Activated CD8-positive, alpha-beta T cell treated with anti-CD3 and anti-CD28 coated beads for 36 hours (primary cell): ENCODE measurements at regions of chr17 and their contacts with region 1.

Region 1: DNA sequence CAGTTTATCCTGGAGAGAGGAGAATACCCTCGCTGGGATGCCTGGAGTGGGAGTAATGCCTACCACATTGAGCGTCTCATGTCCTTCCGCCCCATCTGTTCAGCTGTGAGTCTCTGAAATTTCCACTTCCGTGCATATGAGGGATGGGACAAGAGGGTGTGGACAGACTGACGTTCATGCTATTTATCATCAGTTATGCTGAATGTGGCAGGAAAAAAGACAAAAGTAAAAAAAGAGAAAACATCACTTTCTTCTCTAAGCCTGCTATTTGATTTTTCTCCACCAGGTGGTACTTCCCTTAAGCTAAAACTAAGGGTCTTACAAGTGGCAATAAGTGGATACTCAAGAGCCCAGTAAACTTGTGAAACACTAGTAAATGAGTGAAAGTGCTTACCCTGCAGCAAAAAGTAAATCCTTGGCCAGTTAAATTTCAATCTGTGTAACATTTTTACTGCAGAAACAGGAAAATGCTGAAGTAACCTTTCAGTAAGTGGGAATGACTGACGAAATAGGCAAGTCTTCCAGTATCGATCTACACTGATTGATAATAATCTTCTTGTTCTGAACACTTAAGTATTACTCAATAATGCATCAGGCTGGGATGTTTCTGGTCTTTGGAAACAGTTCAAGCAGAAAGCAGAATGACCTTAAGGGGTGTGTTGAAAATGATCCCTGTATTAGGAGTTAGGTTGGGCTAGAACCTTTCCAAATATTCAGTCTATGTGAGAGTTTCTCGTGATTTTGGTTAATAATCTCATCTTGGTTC is 5.6 kb downstream of the CRYBA1 start:
- DNase-seq: no peak
- ATAC-seq: no peak
- H3K4me3 Mint-ChIP-seq: no peak overlapping the region
- H3K27ac Mint-ChIP-seq: no peak overlapping the region
- H3K4me1 Mint-ChIP-seq: peaks cover 7% of the 10 kb centered on the region
- H3K27me3 Mint-ChIP-seq: no peaks in the 10 kb centered on the region
- CTCF ChIP-seq: peak; percentile 32

Region 2: DNA sequence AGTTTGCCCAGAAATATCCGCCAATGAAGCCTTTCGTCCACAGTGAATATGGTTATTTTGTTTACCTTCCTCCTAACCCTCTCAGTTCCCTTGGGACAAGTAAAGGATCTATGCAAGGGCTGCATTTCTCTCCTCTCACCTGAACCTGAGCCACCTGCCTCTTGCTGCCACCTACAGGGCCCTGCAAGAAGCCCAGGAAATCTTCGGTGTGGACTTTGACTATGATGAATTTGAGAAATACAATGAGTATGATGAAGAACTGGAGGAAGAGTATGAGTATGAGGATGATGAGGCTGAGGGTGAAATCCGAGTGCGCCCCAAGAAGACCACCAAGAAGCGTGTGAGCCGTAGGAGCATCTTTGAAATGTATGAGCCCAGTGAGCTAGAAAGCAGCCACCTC is 576.3 kb before region 1 on chr17:
- CTCF ChIA-PET with region 1: no interaction called
- POLR2A ChIA-PET with region 1: no interaction called
- intact Hi-C with region 1: no loop called
- DNase-seq: peak; percentile 24
- ATAC-seq: peak; percentile 27
- H3K4me3 Mint-ChIP-seq: no peak overlapping the region
- H3K27ac Mint-ChIP-seq: no peak overlapping the region
- H3K4me1 Mint-ChIP-seq: no peaks in the 10 kb centered on the region
- H3K27me3 Mint-ChIP-seq: no peaks in the 10 kb centered on the region
- CTCF ChIP-seq: no peak

Region 3: DNA sequence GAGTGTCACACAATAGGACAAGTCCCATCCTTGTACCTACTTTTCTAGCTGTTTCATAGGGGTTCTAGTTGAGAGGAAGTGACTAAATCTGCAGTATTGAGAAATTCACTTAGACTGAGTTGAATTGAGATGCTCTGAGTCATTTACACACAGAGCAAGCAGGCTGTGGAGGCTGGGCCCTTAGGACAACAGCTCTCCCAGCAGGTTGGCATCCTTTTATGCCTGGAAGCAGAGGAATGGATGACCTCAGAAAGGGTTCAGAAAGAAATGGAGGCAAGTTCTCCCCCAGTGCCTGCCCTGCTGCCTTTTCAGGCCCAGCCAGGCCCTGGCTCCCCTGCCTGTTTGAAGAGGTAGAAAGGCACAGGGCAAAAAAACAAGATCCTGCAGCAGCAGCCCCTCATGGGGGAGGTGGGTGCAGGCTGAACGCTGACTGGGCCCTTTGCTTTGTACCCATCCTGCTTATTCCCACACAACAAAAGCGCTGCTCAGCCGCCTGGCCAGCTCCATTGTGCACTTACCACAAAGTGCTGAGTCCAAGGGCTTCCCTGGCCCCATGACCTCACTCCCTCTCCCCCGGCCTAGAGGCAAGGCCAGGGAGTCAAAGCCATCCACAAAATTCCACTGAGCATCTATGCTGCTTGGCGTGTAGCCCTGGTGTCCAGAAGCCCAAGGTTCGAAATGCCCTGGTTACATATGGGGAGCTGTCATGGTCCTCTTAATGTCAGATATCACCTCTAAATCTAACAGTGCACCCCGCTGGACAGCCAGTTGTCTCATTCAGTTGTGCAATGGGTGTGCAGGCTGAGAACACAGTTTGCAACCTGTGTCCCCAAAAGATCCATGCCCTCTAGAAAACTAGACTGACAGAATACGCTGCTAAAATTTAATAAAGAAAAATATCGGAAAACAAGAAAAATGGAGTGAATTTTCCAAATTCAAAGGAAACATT is 11.0 kb before region 1 on chr17:
- CTCF ChIA-PET with region 1: interaction called, 11 read pairs
- POLR2A ChIA-PET with region 1: interaction called, 4 read pairs
- intact Hi-C with region 1: no loop called
- DNase-seq: peak; percentile 30
- ATAC-seq: peak; percentile 91
- H3K4me3 Mint-ChIP-seq: no peak overlapping the region
- H3K27ac Mint-ChIP-seq: no peak overlapping the region
- H3K4me1 Mint-ChIP-seq: peaks cover 7% of the 10 kb centered on the region
- H3K27me3 Mint-ChIP-seq: no peaks in the 10 kb centered on the region
- CTCF ChIP-seq: no peak